ENCODE measurements at regions of chr15 and their contacts with region 1.

Region 1: GRCh38 chr15:95259513-95259912 is 1028.2 kb downstream of the MCTP2 start:
- DNase-seq: no peak
- H3K4me3 ChIP-seq: no peak overlapping the region
- H3K27ac ChIP-seq: peak overlapping the region in 2 of 4 donors; percentile 14 to 18
- H3K4me1 ChIP-seq: peaks cover 0 to 40% (median 40%) of the 10 kb centered on the region in 4 donors
- H3K27me3 ChIP-seq: no peaks in the 10 kb centered on the region
- CTCF ChIP-seq: peak; percentile 76 to 81 (median 79)
- EP300 ChIP-seq: no peak
- POLR2A ChIP-seq: no peak

Region 2: DNA sequence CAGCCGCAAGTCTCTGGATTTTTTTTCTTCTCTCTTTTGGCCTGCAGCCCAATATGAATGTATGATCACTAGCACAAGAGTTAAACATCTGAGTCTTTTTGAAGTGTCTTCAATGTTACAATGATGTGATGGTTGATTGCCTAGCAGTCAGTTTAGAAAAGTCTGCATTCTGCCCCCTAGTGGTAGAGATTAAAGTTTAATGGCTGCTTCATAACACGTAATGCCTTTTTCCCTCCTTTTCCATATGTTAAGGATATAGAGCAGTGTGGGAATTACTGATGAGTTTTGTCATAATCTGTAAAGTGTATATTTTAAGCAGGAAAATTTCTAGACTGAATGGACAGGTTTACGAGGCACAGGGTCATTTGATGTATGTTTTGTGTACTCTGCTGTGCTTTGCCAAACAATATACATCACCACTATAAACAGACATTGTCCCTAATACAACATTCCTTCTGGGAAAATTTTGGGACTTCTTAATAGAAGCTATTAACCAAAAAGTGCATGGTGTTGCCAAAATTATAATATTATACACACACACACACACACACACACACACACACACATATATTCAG is 32.5 kb after region 1 on chr15:
- intact Hi-C with region 1: loop called (anchors 5 kb)
- DNase-seq: no peak
- H3K4me3 ChIP-seq: no peak overlapping the region
- H3K27ac ChIP-seq: no peak overlapping the region
- H3K4me1 ChIP-seq: peaks cover 3 to 19% (median 12%) of the 10 kb centered on the region in 4 donors
- H3K27me3 ChIP-seq: no peaks in the 10 kb centered on the region
- CTCF ChIP-seq: peak; percentile 48 to 69 (median 59)
- EP300 ChIP-seq: no peak
- POLR2A ChIP-seq: no peak

Region 3: GRCh38 chr15:95439922-95440376 is 180.4 kb after region 1 on chr15:
- intact Hi-C with region 1: loop called (anchors 10 kb)
- DNase-seq: no peak
- H3K4me3 ChIP-seq: no peak overlapping the region
- H3K27ac ChIP-seq: peak overlapping the region in 3 of 4 donors; percentile 4 to 41 (median 5)
- H3K4me1 ChIP-seq: peaks cover 0 to 24% (median 9%) of the 10 kb centered on the region in 4 donors
- H3K27me3 ChIP-seq: no peaks in the 10 kb centered on the region
- CTCF ChIP-seq: no peak
- EP300 ChIP-seq: no peak
- POLR2A ChIP-seq: no peak